ENCODE measurements at regions of chr1 and their contacts with region 1.

Region 1: GRCh38 chr1:42165511-42166163 is 1.1 kb upstream of the GUCA2A start:
- DNase-seq: peak; percentile 97 to 100
- H3K4me3 ChIP-seq: no peak overlapping the region
- H3K27ac ChIP-seq: peak overlapping the region; percentile 70
- H3K4me1 ChIP-seq: peaks cover 59% of the 10 kb centered on the region
- H3K27me3 ChIP-seq: no peaks in the 10 kb centered on the region
- CTCF ChIP-seq: no peak

Region 2: GRCh38 chr1:41461790-41462611 is 703.6 kb before region 1 on chr1:
- CTCF ChIA-PET with region 1: no interaction called
- POLR2A ChIA-PET with region 1: interaction called, 24 read pairs
- intact Hi-C with region 1: no loop called
- DNase-seq: no peak
- H3K4me3 ChIP-seq: no peak overlapping the region
- H3K27ac ChIP-seq: no peak overlapping the region
- H3K4me1 ChIP-seq: no peaks in the 10 kb centered on the region
- H3K27me3 ChIP-seq: no peaks in the 10 kb centered on the region
- CTCF ChIP-seq: no peak

Region 3: DNA sequence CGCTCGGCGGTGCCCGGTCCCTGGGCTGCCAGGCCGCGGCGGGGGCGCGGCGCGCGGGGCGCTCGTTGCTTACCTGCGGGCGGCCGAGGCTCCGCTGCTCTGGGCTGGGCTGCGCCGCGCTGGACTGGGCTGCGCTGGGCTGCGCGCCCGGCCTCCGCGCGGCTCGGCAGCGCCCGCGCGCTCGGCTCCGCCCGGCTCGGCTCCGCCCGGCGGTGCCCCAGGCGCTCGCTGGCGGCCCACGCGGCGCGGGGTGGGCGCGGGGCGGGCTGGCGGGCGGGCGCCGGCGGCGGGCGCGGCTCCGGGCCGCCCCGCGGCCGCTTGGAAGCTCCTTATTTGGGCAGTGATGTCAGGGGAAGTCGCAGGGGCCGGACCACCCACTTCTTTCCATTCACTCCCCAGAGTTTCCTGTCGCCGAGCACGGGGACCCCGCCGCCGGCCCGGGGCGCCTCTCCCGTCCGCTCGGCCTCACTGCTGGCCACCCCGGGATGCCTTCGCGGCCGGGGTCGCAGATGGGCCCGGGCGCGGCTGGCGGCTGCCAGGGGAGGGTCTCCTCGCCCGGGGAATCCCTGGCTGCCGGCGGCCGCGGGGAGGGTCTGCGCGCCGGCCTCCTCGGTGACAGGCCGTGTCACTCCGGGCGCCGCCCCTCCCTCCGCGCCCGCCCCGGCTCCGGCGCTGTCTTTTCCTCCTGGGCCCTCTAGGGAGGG is 503.4 kb before region 1 on chr1:
- CTCF ChIA-PET with region 1: no interaction called
- POLR2A ChIA-PET with region 1: no interaction called
- intact Hi-C with region 1: loop called (anchors 10 kb)
- DNase-seq: peak in 1 of 2 experiments; percentile 63
- H3K4me3 ChIP-seq: peak overlapping the region; percentile 81; the same call in 1 of the 2 replicates
- H3K27ac ChIP-seq: no peak overlapping the region
- H3K4me1 ChIP-seq: peaks cover 53% of the 10 kb centered on the region
- H3K27me3 ChIP-seq: no peaks in the 10 kb centered on the region
- CTCF ChIP-seq: no peak

Region 4: DNA sequence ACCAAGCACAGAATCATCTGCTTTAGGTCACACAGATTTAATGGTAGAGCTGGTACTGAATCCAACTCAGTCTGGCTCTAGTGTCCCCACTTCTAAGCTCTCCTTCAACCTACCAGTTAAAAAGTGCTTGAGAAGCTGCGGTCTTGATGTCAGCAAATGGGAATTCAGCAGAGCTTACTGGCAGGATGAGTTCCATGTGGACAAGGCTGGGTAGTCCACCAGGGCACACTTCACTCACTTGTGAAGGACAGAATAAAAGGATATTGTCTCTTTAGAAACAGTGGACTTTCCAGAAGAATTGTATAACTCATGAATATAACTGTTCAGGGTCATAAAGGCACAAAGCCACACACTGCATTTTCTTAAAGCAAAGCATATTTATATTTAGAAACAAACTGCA is 47.5 kb before region 1 on chr1:
- CTCF ChIA-PET with region 1: no interaction called
- POLR2A ChIA-PET with region 1: no interaction called
- intact Hi-C with region 1: no loop called
- DNase-seq: no peak
- H3K4me3 ChIP-seq: no peak overlapping the region
- H3K27ac ChIP-seq: no peak overlapping the region
- H3K4me1 ChIP-seq: no peaks in the 10 kb centered on the region
- H3K27me3 ChIP-seq: no peaks in the 10 kb centered on the region
- CTCF ChIP-seq: no peak

Region 5: GRCh38 chr1:42146626-42147320 is 18.9 kb before region 1 on chr1:
- CTCF ChIA-PET with region 1: interaction called, 4 read pairs
- POLR2A ChIA-PET with region 1: interaction called, 4 read pairs
- intact Hi-C with region 1: loop called (anchors 1 kb)
- DNase-seq: peak; percentile 85 to 89
- H3K4me3 ChIP-seq: no peak overlapping the region
- H3K27ac ChIP-seq: no peak overlapping the region
- H3K4me1 ChIP-seq: peaks cover 26% of the 10 kb centered on the region
- H3K27me3 ChIP-seq: no peaks in the 10 kb centered on the region; the same call in 1 of the 2 replicates
- CTCF ChIP-seq: peak; percentile 94

Region 6: GRCh38 chr1:42766741-42767509 is 601.3 kb after region 1 on chr1 and contains the starts of genes C1orf50 and P3H1:
- CTCF ChIA-PET with region 1: no interaction called
- POLR2A ChIA-PET with region 1: no interaction called
- intact Hi-C with region 1: loop called (anchors 2 kb)
- DNase-seq: peak; percentile 96 to 100
- H3K4me3 ChIP-seq: peak within 1 kb of the TSS; percentile 86
- H3K27ac ChIP-seq: no peak within 1 kb of the TSS
- H3K4me1 ChIP-seq: peaks cover 24% of the 10 kb centered on the region
- H3K27me3 ChIP-seq: no peaks in the 10 kb centered on the region
- CTCF ChIP-seq: no peak
- total RNA-seq, gene C1orf50: 5.6 and 8.3 TPM in 2 replicates
- total RNA-seq, gene P3H1: 22.8 and 45.5 TPM in 2 replicates